SK-N-SH (cell line): ENCODE measurements at regions of chr6 and their contacts with region 1.

Region 1: DNA sequence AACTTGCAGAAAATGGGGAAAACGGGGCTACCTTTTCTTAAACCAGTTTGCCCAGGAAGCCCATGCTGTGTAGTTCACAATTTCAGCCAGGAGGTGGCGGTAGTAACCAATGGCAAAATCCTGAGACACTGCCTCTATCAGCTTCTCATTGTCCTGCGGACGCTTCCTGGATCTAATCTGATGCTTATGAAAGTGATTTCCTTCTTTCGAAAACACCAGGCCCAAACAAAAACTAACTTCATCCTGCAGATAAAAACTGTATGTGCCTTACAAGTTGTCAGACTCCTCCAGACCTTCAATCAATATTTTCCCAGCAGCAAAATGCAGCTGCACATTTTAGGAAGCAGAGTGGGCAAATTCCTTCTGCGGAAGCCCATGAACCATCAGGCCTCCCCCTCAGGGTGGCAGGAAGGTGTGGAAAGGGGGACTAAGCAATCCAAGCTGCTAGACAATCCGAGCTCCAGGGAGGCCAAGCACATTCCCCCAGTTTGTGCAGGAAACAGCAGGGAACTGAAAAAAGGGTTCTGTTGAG is 88.5 kb downstream of the LY86 start:
- DNase-seq: peak; percentile 65
- H3K4me3 ChIP-seq: no peak overlapping the region; a peak in 1 of 4 replicates
- H3K27ac ChIP-seq: no peak overlapping the region
- H3K4me1 ChIP-seq: peaks cover 0 to 2% of the 10 kb centered on the region in 2 experiments; a peak in 1 of 4 replicates
- H3K27me3 ChIP-seq: no peaks in the 10 kb centered on the region
- CTCF ChIP-seq: peak; percentile 97
- EP300 ChIP-seq: no peak
- RAD21 ChIP-seq: peak; percentile 87

Region 2: DNA sequence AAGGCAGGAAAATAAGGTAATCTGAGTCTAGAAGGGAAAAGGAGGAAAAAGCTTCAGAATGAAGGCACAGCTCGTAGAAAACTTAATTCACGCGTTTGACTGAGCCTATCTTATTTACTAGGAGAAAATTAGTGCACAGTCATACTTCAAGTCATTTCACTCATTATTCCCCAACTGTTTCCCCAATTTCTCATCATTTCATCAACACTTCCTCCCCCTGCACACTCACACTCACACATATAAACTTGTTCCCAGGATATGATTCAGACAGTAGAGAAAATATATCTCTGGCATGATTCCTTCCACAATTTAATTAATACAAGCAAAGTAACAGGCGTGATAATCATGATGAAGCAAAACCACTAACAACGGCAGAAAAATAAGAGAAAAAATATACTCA is 262.0 kb before region 1 on chr6:
- CTCF ChIA-PET with region 1: no interaction called
- POLR2A ChIA-PET with region 1: no interaction called
- DNase-seq: no peak
- H3K4me3 ChIP-seq: no peak overlapping the region
- H3K27ac ChIP-seq: no peak overlapping the region
- H3K4me1 ChIP-seq: no peaks in the 10 kb centered on the region
- H3K27me3 ChIP-seq: no peaks in the 10 kb centered on the region
- CTCF ChIP-seq: no peak
- EP300 ChIP-seq: no peak
- RAD21 ChIP-seq: no peak

Region 3: GRCh38 chr6:6661684-6662083 is 15.3 kb before region 1 on chr6:
- CTCF ChIA-PET with region 1: interaction called, 17 read pairs
- POLR2A ChIA-PET with region 1: no interaction called
- DNase-seq: peak; percentile 36
- H3K4me3 ChIP-seq: no peak overlapping the region
- H3K27ac ChIP-seq: no peak overlapping the region
- H3K4me1 ChIP-seq: peaks cover 0 to 9% of the 10 kb centered on the region in 2 experiments; a peak in 1 of 4 replicates
- H3K27me3 ChIP-seq: no peaks in the 10 kb centered on the region
- CTCF ChIP-seq: no peak
- EP300 ChIP-seq: no peak
- RAD21 ChIP-seq: no peak

Region 4: DNA sequence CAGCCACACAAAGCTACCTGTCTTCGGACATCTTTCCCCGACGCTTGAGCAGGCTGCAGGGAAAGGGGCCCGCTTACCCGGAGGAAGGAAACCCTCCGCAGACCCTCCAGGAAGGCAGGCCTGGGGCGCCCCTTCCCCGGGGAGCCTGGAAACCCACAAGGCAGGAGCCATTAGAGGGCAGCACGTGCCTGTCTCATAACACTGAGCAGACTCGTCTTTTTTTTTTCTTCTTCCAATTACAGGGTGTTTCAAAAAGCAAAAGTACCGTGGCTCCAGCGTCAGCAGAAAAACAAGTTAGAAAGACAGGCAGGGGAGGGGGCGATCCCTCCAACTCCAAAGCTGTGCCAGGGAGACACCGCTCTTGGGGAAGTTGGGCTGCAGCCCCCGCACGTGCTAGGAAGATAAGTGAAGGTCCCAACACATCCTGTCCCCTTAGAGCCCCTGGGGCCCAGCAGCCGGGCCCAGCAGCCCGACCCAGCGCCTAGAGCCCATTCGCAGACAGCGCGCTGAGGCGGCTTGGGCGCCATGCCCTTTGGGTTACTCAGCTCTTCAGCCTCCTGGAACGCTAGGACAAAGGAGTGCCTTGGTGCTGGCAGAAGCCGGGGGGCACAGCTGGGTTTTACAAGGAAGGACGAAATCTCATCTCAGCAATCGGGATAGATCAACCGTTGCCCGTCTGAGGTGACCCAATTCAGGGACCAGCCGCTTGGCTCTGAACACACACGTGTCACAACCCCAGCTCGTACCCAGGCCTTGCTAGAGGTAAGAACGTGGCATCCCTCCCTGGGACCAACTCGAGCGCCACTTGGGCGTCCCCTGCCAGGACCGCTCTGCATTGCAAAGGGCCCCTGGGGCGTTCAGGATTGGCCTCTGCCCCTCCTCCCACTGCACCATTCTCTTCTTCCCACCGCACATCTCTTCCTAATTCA is 47.8 kb after region 1 on chr6:
- CTCF ChIA-PET with region 1: interaction called, 12 read pairs
- POLR2A ChIA-PET with region 1: no interaction called
- DNase-seq: peak; percentile 73
- H3K4me3 ChIP-seq: peak overlapping the region; percentile 17 to 33; a peak in 2 of 4 replicates
- H3K27ac ChIP-seq: no peak overlapping the region
- H3K4me1 ChIP-seq: peaks cover 2 to 4% of the 10 kb centered on the region in 2 experiments; a peak in 2 of 4 replicates
- H3K27me3 ChIP-seq: no peaks in the 10 kb centered on the region
- CTCF ChIP-seq: peak; percentile 59
- EP300 ChIP-seq: no peak
- RAD21 ChIP-seq: peak; percentile 73

Region 5: GRCh38 chr6:7238900-7239589 is 562.1 kb after region 1 on chr6:
- CTCF ChIA-PET with region 1: interaction called, 24 read pairs
- POLR2A ChIA-PET with region 1: no interaction called
- DNase-seq: peak; percentile 79
- H3K4me3 ChIP-seq: no peak overlapping the region; a peak in 1 of 4 replicates
- H3K27ac ChIP-seq: no peak overlapping the region
- H3K4me1 ChIP-seq: peaks cover 0 to 13% of the 10 kb centered on the region in 2 experiments; a peak in 2 of 4 replicates
- H3K27me3 ChIP-seq: no peaks in the 10 kb centered on the region
- CTCF ChIP-seq: peak; percentile 73
- EP300 ChIP-seq: no peak
- RAD21 ChIP-seq: peak; percentile 72

Region 6: DNA sequence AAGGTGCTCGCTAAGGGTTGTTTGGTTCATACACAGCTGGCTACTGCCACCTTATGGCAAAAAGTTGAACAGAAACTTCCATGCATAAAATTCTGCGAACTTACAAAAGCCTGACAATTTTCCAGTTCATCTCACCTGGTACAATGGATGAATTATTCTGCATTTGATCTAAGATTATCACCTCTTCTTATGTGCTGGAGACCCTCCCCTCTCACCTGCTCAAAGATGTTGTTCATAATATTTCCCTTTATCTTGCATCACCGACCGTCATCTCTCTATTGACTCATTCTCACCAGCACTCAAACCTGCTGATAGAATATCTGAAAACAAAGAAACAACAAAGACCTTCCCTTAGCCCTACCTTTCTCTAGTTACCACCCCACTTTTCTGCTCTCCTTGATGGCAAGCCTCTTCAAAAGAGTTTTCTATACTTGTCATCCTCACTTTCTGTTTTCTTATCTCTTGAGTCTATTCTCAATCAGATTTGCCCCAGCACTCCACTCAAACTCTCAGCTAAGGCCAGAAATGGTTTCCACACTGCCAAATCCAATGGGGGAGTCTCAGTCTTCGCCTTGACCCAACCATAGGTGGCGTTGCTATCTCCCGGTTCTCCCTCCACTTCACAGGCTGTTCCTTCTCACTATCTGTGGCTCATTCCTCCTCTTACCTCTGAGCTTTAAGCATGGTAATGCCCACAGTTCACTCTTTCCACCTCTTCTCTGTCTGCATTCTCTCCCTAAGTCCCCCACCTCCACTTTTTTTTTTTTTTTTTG is 938.8 kb after region 1 on chr6:
- CTCF ChIA-PET with region 1: interaction called, 14 read pairs
- POLR2A ChIA-PET with region 1: no interaction called
- DNase-seq: peak; percentile 41
- H3K4me3 ChIP-seq: peak overlapping the region in 1 of 2 experiments; percentile 20; a peak in 1 of 4 replicates
- H3K27ac ChIP-seq: no peak overlapping the region
- H3K4me1 ChIP-seq: no peaks in the 10 kb centered on the region
- H3K27me3 ChIP-seq: no peaks in the 10 kb centered on the region
- CTCF ChIP-seq: peak; percentile 86
- EP300 ChIP-seq: no peak
- RAD21 ChIP-seq: peak; percentile 90